Naive thymus-derived CD4-positive, alpha-beta T cell (primary cell): ENCODE measurements at regions of chr17 and their contacts with region 1.

Region 1: GRCh38 chr17:31308372-31309334 is 5.2 kb downstream of the EVI2B start:
- DNase-seq: peak in 3 of 9 donors; percentile 13 to 56 (median 22)
- ATAC-seq: peak; percentile 46
- H3K4me3 ChIP-seq: peak overlapping the region; percentile 63
- H3K4me3 Mint-ChIP-seq: peak overlapping the region; percentile 38 to 95 (median 92)
- H3K27ac ChIP-seq: peak overlapping the region; percentile 82
- H3K27ac Mint-ChIP-seq: peak overlapping the region; percentile 94 to 99 (median 95)
- H3K4me1 ChIP-seq: peaks cover 27 to 33% of the 10 kb centered on the region in 2 donors
- H3K4me1 Mint-ChIP-seq: peaks cover 40 to 64% (median 56%) of the 10 kb centered on the region in 7 donors
- H3K27me3 ChIP-seq: no peaks in the 10 kb centered on the region
- H3K27me3 Mint-ChIP-seq: no peaks in the 10 kb centered on the region

Region 2: DNA sequence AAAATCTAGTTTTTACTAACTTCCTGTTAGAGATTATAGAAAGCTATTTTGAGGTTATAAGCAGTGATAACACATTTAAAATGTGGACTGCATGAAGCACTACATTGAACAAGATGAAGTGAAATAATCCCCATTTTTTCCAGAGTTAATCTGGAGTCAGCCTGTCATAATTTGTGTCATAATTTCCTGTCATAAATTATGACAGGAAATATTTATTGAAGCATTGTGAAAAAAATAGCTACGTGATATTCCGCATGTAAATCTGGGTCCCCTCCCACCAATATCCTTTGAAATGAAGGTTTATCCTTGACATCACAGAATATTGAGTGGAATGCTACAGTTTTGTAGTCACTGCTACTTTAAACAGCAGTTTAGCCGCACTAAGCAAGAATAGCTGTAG is 51.7 kb before region 1 on chr17:
- CTCF ChIA-PET with region 1: no interaction called
- POLR2A ChIA-PET with region 1: no interaction called
- intact Hi-C with region 1: no loop called
- DNase-seq: no peak
- ATAC-seq: no peak
- H3K4me3 ChIP-seq: no peak overlapping the region
- H3K4me3 Mint-ChIP-seq: no peak overlapping the region
- H3K27ac ChIP-seq: no peak overlapping the region
- H3K27ac Mint-ChIP-seq: no peak overlapping the region
- H3K4me1 ChIP-seq: no peaks in the 10 kb centered on the region
- H3K4me1 Mint-ChIP-seq: no peaks in the 10 kb centered on the region
- H3K27me3 ChIP-seq: no peaks in the 10 kb centered on the region
- H3K27me3 Mint-ChIP-seq: no peaks in the 10 kb centered on the region

Region 3: DNA sequence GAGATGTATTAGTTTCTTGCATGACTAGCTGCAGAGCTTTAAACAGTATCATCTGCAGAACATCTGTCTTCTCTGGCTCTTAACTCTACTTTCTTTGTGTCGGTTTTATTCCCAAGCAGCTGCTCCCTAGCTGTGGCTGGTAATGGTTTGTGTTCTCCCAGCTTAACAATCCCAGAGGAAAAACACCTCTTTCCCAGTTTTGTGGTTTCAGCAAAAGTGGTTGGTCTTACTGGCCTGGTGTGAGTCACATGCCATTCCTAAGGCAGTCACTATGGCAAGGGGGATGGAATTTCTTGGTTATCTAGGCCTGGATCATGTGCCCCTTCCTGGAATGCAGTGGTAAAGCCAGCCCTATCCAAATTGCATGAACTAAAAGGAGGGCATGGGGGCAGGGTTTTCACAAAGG is 39.1 kb before region 1 on chr17:
- CTCF ChIA-PET with region 1: interaction called, 4 read pairs
- POLR2A ChIA-PET with region 1: interaction called, 7 read pairs
- intact Hi-C with region 1: loop called (anchors 1 to 5 kb)
- DNase-seq: no peak
- ATAC-seq: no peak
- H3K4me3 ChIP-seq: no peak overlapping the region
- H3K4me3 Mint-ChIP-seq: no peak overlapping the region
- H3K27ac ChIP-seq: no peak overlapping the region
- H3K27ac Mint-ChIP-seq: no peak overlapping the region
- H3K4me1 ChIP-seq: no peaks in the 10 kb centered on the region
- H3K4me1 Mint-ChIP-seq: peaks cover 0 to 9% (median 5%) of the 10 kb centered on the region in 7 donors
- H3K27me3 ChIP-seq: no peaks in the 10 kb centered on the region
- H3K27me3 Mint-ChIP-seq: no peaks in the 10 kb centered on the region